ENCODE measurements at regions of chr5 and their contacts with region 1.

Region 1: DNA sequence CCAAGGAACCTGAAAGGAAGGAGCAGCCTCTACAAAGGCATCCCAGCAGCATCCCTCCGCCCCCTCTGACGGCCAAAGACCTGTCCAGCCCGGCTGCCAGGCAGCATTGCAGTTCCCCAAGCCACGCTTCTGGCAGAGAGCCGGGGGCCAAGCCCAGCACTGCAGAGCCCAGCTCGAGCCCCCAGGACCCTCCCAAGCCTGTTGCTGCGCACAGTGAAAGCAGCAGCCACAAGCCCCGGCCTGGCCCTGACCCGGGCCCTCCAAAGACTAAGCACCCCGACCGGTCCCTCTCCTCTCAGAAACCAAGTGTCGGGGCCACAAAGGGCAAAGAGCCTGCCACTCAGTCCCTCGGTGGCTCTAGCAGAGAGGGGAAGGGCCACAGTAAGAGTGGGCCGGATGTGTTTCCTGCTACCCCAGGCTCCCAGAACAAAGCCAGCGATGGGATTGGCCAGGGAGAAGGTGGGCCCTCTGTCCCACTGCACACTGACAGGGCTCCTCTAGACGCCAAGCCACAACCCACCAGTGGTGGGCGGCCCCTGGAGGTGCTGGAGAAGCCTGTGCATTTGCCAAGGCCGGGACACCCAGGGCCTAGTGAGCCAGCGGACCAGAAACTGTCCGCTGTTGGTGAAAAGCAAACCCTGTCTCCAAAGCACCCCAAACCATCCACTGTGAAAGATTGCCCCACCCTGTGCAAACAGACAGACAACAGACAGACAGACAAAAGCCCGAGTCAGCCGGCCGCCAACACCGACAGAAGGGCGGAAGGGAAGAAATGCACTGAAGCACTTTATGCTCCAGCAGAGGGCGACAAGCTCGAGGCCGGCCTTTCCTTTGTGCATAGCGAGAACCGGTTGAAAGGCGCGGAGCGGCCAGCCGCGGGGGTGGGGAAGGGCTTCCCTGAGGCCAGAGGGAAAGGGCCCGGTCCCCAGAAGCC is 30.8 kb downstream of the CD180 start:
- DNase-seq: peak; percentile 94 to 95
- ATAC-seq: peak; percentile 91
- H3K4me3 ChIP-seq: peak overlapping the region in 1 of 2 donors; percentile 20
- H3K27ac ChIP-seq: peak overlapping the region in 1 of 2 donors; percentile 81
- H3K4me1 ChIP-seq: no peaks in the 10 kb centered on the region
- H3K27me3 ChIP-seq: no peaks in the 10 kb centered on the region

Region 2: GRCh38 chr5:66864331-66864840 is 301.4 kb before region 1 on chr5:
- intact Hi-C with region 1: no loop called
- DNase-seq: no peak
- ATAC-seq: no peak
- H3K4me3 ChIP-seq: no peak overlapping the region
- H3K27ac ChIP-seq: no peak overlapping the region
- H3K4me1 ChIP-seq: no peaks in the 10 kb centered on the region
- H3K27me3 ChIP-seq: no peaks in the 10 kb centered on the region

Region 3: DNA sequence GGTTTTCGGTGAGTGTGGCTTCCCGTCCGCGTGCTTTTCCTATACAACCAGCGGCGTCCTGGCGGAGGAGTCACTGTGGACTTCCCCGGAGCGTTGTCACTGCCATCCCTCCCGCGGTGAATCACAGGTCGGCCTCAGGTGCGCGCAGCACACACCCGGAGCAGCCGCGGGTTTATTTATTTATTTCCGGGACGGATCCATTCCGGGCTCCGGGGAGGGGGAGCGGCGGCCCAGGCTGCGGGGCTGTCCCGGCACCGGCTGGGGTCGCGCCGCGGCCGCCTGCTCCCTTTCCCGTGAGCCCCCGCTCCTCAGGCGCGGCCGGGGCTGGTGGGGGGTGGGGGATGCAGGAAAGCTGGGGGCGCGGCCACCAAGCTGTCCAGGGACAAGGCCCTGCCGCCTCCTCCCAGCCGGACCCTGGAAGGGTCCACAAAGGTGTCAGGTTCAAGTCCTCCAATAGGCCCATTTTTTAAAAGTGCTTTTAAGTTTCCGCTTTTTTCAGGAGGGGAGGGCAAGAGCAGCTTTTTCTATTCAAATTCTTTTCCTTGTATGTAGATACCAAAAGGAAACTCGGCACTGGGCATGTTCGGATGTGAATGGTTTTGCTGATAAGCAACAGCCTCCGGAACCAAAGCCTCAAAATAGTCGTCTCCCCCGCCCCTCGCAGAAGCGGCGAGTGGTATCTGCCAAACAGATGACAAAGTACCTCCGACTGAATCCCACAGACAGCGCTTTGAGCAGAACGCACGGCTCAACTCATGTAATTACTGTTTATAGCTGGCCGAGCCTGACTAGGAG is 161.7 kb before region 1 on chr5:
- intact Hi-C with region 1: loop called in 1 of 2 experiments (anchors 10 kb)
- DNase-seq: peak; percentile 89 to 90
- ATAC-seq: peak; percentile 92
- H3K4me3 ChIP-seq: peak overlapping the region; percentile 71 to 97
- H3K27ac ChIP-seq: peak overlapping the region; percentile 89 to 96
- H3K4me1 ChIP-seq: peaks cover 2 to 26% of the 10 kb centered on the region in 2 donors
- H3K27me3 ChIP-seq: no peaks in the 10 kb centered on the region

Region 4: GRCh38 chr5:67181648-67182221 is 15.9 kb after region 1 on chr5:
- intact Hi-C with region 1: loop called in 1 of 2 experiments (anchors 2 kb)
- DNase-seq: no peak
- ATAC-seq: no peak
- H3K4me3 ChIP-seq: no peak overlapping the region
- H3K27ac ChIP-seq: peak overlapping the region; percentile 10 to 26
- H3K4me1 ChIP-seq: no peaks in the 10 kb centered on the region
- H3K27me3 ChIP-seq: no peaks in the 10 kb centered on the region

Region 5: DNA sequence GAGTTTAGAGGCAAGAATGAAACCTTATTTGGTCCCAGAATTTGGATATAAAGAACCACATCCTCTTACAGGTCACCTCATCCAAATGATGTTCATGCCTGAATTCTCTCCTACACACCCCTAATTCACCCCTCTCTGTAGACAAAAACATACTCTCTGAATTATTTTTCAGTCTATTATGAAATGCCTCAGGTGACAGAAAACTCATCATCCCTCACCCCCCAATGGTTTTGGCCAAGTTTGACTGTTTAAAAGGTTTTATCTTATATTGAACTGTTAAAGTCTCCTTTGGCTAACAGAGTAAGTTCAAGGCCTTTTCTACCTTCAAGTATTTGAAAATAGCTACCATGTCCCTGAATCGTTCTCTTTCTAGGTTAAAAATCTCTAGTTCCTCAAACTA is 33.1 kb after region 1 on chr5:
- intact Hi-C with region 1: no loop called
- DNase-seq: no peak
- ATAC-seq: no peak
- H3K4me3 ChIP-seq: no peak overlapping the region
- H3K27ac ChIP-seq: no peak overlapping the region
- H3K4me1 ChIP-seq: peaks cover 0 to 2% of the 10 kb centered on the region in 2 donors
- H3K27me3 ChIP-seq: no peaks in the 10 kb centered on the region

Region 6: GRCh38 chr5:67209142-67209771 is 43.5 kb after region 1 on chr5:
- intact Hi-C with region 1: loop called (anchors 1 to 2 kb)
- DNase-seq: peak in 1 of 2 donors; percentile 64
- ATAC-seq: peak; percentile 85
- H3K4me3 ChIP-seq: no peak overlapping the region
- H3K27ac ChIP-seq: no peak overlapping the region
- H3K4me1 ChIP-seq: no peaks in the 10 kb centered on the region
- H3K27me3 ChIP-seq: no peaks in the 10 kb centered on the region

Region 7: GRCh38 chr5:67414712-67415111 is 248.9 kb after region 1 on chr5:
- intact Hi-C with region 1: no loop called
- DNase-seq: no peak
- ATAC-seq: no peak
- H3K4me3 ChIP-seq: no peak overlapping the region
- H3K27ac ChIP-seq: no peak overlapping the region
- H3K4me1 ChIP-seq: no peaks in the 10 kb centered on the region
- H3K27me3 ChIP-seq: no peaks in the 10 kb centered on the region

Measured in aorta (tissue), 5 donors.